B cell (primary cell): ENCODE measurements at regions of chr12 and their contacts with region 1.

Region 1: GRCh38 chr12:68807576-68808387 is at the start of gene MDM2:
- DNase-seq: peak; percentile 98
- ATAC-seq: peak; percentile 90
- H3K4me3 ChIP-seq: peak within 1 kb of the TSS; percentile 65 to 95 (median 84)
- H3K4me3 Mint-ChIP-seq: peak within 1 kb of the TSS; percentile 97
- H3K27ac ChIP-seq: peak within 1 kb of the TSS; percentile 92 to 95
- H3K27ac Mint-ChIP-seq: peak within 1 kb of the TSS; percentile 99
- H3K4me1 ChIP-seq: peaks cover 11% of the 10 kb centered on the region in 2 donors
- H3K4me1 Mint-ChIP-seq: peaks cover 17% of the 10 kb centered on the region
- H3K27me3 ChIP-seq: no peaks in the 10 kb centered on the region
- H3K27me3 Mint-ChIP-seq: no peaks in the 10 kb centered on the region
- CTCF ChIP-seq: peak; percentile 76
- total RNA-seq, gene MDM2: 78.7 and 87.0 TPM in 2 replicates

Region 2: GRCh38 chr12:68113644-68114043 is 694.1 kb before region 1 on chr12:
- CTCF ChIA-PET with region 1: no interaction called
- POLR2A ChIA-PET with region 1: no interaction called
- intact Hi-C with region 1: no loop called
- DNase-seq: no peak
- ATAC-seq: no peak
- H3K4me3 ChIP-seq: no peak overlapping the region
- H3K4me3 Mint-ChIP-seq: no peak overlapping the region
- H3K27ac ChIP-seq: no peak overlapping the region
- H3K27ac Mint-ChIP-seq: no peak overlapping the region
- H3K4me1 ChIP-seq: no peaks in the 10 kb centered on the region
- H3K4me1 Mint-ChIP-seq: no peaks in the 10 kb centered on the region
- H3K27me3 ChIP-seq: no peaks in the 10 kb centered on the region
- H3K27me3 Mint-ChIP-seq: no peaks in the 10 kb centered on the region
- CTCF ChIP-seq: no peak

Region 3: GRCh38 chr12:68203460-68203875 is 604.3 kb before region 1 on chr12:
- CTCF ChIA-PET with region 1: no interaction called
- POLR2A ChIA-PET with region 1: no interaction called
- intact Hi-C with region 1: no loop called
- DNase-seq: no peak
- ATAC-seq: no peak
- H3K4me3 ChIP-seq: no peak overlapping the region
- H3K4me3 Mint-ChIP-seq: no peak overlapping the region
- H3K27ac ChIP-seq: no peak overlapping the region
- H3K27ac Mint-ChIP-seq: no peak overlapping the region
- H3K4me1 ChIP-seq: no peaks in the 10 kb centered on the region
- H3K4me1 Mint-ChIP-seq: no peaks in the 10 kb centered on the region
- H3K27me3 ChIP-seq: no peaks in the 10 kb centered on the region
- H3K27me3 Mint-ChIP-seq: peaks cover 5% of the 10 kb centered on the region
- CTCF ChIP-seq: no peak

Region 4: GRCh38 chr12:68223083-68223747 is 584.6 kb before region 1 on chr12:
- CTCF ChIA-PET with region 1: interaction called, 4 read pairs
- POLR2A ChIA-PET with region 1: no interaction called
- intact Hi-C with region 1: loop called (anchors 10 kb)
- DNase-seq: peak; percentile 85
- ATAC-seq: peak; percentile 97
- H3K4me3 ChIP-seq: no peak overlapping the region
- H3K4me3 Mint-ChIP-seq: peak overlapping the region; percentile 66
- H3K27ac ChIP-seq: no peak overlapping the region
- H3K27ac Mint-ChIP-seq: no peak overlapping the region
- H3K4me1 ChIP-seq: peaks cover 6 to 7% of the 10 kb centered on the region in 2 donors
- H3K4me1 Mint-ChIP-seq: peaks cover 6% of the 10 kb centered on the region
- H3K27me3 ChIP-seq: no peaks in the 10 kb centered on the region
- H3K27me3 Mint-ChIP-seq: peaks cover 9% of the 10 kb centered on the region
- CTCF ChIP-seq: peak; percentile 87

Region 5: DNA sequence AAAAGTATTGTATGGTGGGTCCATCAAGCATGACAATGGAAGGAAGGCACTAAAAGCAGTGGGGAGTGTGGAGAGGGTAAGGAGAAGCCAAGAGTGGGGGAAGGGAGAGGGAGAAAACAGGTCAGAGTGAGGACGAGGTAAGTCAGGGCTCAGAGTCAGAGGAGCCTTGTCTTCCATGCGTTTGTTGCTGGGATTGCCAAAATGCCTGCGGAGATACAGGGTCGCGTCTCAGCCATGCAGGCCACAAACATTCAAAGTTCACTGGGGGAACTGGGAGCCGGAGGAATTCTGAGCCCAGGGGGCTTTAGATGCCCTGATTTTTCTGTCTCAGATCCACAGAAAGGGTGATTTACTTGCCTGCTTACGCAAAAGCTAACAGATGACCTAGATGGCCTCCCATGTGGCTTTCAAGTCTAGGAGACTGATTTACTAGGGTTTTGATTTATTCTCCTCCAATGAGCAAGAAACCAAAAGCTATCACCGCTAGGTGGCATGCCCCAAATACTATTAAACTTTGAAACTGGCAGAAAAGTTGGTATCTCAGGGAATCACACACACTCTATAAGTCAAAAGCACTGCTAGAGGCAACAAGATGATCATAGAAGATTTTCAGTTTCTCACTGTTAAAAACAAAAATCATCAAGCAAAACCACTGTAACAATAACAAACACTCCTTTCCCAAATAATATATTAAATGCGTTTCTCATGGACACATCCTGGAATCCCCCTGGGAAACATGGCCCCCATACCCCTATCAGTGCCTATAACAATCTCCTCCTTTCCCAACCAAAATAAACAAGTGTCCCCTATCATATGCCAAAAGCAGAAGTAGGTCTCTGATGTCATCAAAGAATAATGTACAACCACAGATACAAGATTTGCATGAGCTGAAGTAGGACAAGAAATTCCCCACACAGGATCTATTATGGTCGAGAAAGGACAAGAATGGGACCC is 449.0 kb before region 1 on chr12:
- CTCF ChIA-PET with region 1: no interaction called
- POLR2A ChIA-PET with region 1: interaction called, 7 read pairs
- intact Hi-C with region 1: loop called (anchors 2 kb)
- DNase-seq: peak; percentile 86
- ATAC-seq: peak; percentile 82
- H3K4me3 ChIP-seq: peak overlapping the region in 1 of 5 experiments; percentile 5
- H3K4me3 Mint-ChIP-seq: peak overlapping the region; percentile 54
- H3K27ac ChIP-seq: peak overlapping the region; percentile 78 to 84
- H3K27ac Mint-ChIP-seq: peak overlapping the region; percentile 86
- H3K4me1 ChIP-seq: peaks cover 21 to 22% of the 10 kb centered on the region in 2 donors
- H3K4me1 Mint-ChIP-seq: peaks cover 23% of the 10 kb centered on the region
- H3K27me3 ChIP-seq: no peaks in the 10 kb centered on the region
- H3K27me3 Mint-ChIP-seq: no peaks in the 10 kb centered on the region
- CTCF ChIP-seq: peak; percentile 73

Region 6: GRCh38 chr12:68745904-68746571 is 61.7 kb before region 1 on chr12 and contains the start of gene SLC35E3:
- CTCF ChIA-PET with region 1: interaction called, 19 read pairs
- POLR2A ChIA-PET with region 1: interaction called, 29 read pairs
- intact Hi-C with region 1: loop called (anchors 1 kb)
- DNase-seq: peak; percentile 93
- ATAC-seq: peak; percentile 97
- H3K4me3 ChIP-seq: peak within 1 kb of the TSS; percentile 75 to 96 (median 89)
- H3K4me3 Mint-ChIP-seq: peak within 1 kb of the TSS; percentile 97
- H3K27ac ChIP-seq: peak within 1 kb of the TSS; percentile 71 to 89
- H3K27ac Mint-ChIP-seq: peak within 1 kb of the TSS; percentile 95
- H3K4me1 ChIP-seq: peaks cover 21 to 26% of the 10 kb centered on the region in 2 donors
- H3K4me1 Mint-ChIP-seq: peaks cover 53% of the 10 kb centered on the region
- H3K27me3 ChIP-seq: no peaks in the 10 kb centered on the region
- H3K27me3 Mint-ChIP-seq: no peaks in the 10 kb centered on the region
- CTCF ChIP-seq: no peak
- total RNA-seq, gene SLC35E3: 15.1 TPM in 2 replicates

Region 7: GRCh38 chr12:68821357-68822188 is 13.8 kb after region 1 on chr12:
- CTCF ChIA-PET with region 1: interaction called, 6 read pairs
- POLR2A ChIA-PET with region 1: interaction called, 16 read pairs
- intact Hi-C with region 1: no loop called
- DNase-seq: no peak
- ATAC-seq: no peak
- H3K4me3 ChIP-seq: no peak overlapping the region
- H3K4me3 Mint-ChIP-seq: no peak overlapping the region
- H3K27ac ChIP-seq: peak overlapping the region in 1 of 2 donors; percentile 47
- H3K27ac Mint-ChIP-seq: peak overlapping the region; percentile 56
- H3K4me1 ChIP-seq: peaks cover 0 to 3% of the 10 kb centered on the region in 2 donors
- H3K4me1 Mint-ChIP-seq: peaks cover 12% of the 10 kb centered on the region
- H3K27me3 ChIP-seq: no peaks in the 10 kb centered on the region
- H3K27me3 Mint-ChIP-seq: no peaks in the 10 kb centered on the region
- CTCF ChIP-seq: no peak